AG04450 (cell line): ENCODE measurements at regions of chr12 and their contacts with region 1.

Region 1: GRCh38 chr12:64696080-64696741 is 63.0 kb downstream of the GNS start:
- DNase-seq: no peak
- H3K4me3 ChIP-seq: no peak overlapping the region
- H3K27ac ChIP-seq: no peak overlapping the region
- H3K27me3 ChIP-seq: no peaks in the 10 kb centered on the region
- CTCF ChIP-seq: peak; percentile 34; the same call in 1 of the 2 replicates

Region 2: DNA sequence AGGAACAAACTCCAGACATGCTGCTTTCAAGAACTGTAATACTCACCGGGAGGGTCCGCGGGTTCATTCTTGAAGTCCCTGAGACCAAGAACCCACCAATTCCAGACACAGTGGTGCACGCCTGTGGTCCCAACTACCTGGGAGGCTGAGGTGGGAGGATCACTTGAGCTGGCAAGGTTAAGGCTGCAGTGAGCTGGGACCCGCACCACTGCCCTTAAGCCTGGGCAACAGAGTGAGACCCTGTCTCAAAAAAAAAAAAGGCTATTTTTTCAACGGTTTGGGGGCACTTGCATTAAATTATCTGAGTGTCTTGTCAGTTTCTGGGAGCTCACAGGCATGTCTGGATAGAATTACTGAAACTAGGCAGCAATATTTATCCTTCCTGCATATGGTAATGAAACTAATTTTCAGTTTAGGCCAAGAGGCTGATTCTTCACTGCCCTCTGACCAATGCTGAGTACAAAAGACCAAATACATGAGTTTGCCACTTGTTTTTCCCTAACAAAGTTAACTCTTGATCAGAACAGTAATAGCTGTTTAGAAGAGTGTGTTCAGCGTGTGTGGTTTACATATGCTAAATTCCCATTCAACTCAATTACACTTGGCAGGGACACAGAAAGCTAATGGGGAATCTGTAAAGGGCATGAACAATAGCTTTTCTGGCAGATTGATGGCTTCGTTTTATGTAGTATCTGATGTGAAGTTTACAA is 151.7 kb before region 1 on chr12:
- CTCF ChIA-PET with region 1: interaction called, 230 read pairs
- POLR2A ChIA-PET with region 1: interaction called, 11 read pairs
- DNase-seq: no peak
- H3K4me3 ChIP-seq: no peak overlapping the region
- H3K27ac ChIP-seq: no peak overlapping the region
- H3K27me3 ChIP-seq: no peaks in the 10 kb centered on the region
- CTCF ChIP-seq: no peak

Region 3: DNA sequence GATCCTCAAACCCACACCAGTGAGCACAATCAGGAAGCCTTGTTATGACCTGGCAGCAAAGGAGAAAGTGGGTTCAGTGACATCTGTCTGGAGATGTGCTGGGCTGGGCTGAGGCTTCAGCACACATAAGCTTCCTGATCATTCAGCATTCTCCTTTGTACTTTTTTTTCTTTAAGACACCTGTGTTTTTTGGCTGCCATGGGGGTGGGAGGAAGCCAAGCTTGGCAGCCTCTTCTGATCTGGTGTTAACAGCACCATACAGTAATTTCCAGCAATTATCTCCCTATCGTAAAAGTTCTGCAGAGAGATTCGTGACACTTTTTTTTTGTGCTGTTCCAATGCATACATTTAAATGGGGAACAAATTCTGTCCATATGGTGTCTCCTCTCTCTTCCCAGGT is 124.8 kb before region 1 on chr12:
- CTCF ChIA-PET with region 1: interaction called, 11 read pairs
- POLR2A ChIA-PET with region 1: interaction called, 5 read pairs
- DNase-seq: no peak
- H3K4me3 ChIP-seq: no peak overlapping the region
- H3K27ac ChIP-seq: no peak overlapping the region
- H3K27me3 ChIP-seq: peaks cover 3% of the 10 kb centered on the region
- CTCF ChIP-seq: no peak

Region 4: GRCh38 chr12:64618953-64619590 is 77.1 kb before region 1 on chr12:
- CTCF ChIA-PET with region 1: interaction called, 12 read pairs
- POLR2A ChIA-PET with region 1: no interaction called
- DNase-seq: no peak
- H3K4me3 ChIP-seq: no peak overlapping the region
- H3K27ac ChIP-seq: no peak overlapping the region
- H3K27me3 ChIP-seq: no peaks in the 10 kb centered on the region
- CTCF ChIP-seq: no peak

Region 5: DNA sequence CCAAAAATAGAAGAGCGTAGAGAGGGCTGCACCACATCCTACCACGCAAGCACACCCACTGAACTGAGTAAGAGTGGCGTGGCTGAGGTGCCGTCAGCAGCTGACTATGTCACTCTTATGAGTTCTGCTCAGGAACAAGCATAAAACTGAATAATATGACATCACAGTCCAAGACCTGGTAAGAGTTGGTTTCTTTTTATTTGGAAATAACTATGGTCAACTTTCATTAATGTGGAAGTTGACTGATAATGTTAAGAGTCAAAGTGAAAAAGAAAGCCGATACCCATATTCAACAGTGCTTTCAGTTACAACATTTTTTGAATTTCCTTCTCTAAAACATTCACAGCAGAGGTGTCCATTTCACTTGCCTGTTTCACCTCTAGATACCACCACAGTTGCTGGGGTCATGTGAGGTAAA is 18.3 kb after region 1 on chr12:
- CTCF ChIA-PET with region 1: interaction called, 15 read pairs
- POLR2A ChIA-PET with region 1: no interaction called
- DNase-seq: no peak
- H3K4me3 ChIP-seq: no peak overlapping the region
- H3K27ac ChIP-seq: no peak overlapping the region
- H3K27me3 ChIP-seq: no peaks in the 10 kb centered on the region
- CTCF ChIP-seq: no peak

Region 6: DNA sequence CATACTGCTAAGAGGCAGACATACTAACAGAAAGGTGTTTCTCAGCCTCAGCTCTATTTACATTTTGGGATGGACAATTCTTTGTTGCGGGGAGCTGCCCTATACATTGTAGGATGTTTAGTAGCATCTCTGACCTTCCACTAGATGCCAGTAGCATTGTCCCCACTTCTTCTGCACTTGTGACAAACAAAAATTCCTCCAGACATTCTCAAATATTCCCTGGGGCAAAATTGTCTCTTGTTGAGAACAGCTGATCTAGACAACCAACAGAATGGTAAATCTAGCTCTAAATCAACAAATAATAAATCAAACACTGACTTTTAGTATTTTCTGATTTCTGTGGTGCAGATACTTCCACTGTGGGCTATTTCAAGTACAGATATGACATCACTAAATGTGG is 642.9 kb after region 1 on chr12:
- CTCF ChIA-PET with region 1: no interaction called
- POLR2A ChIA-PET with region 1: no interaction called
- DNase-seq: no peak
- H3K4me3 ChIP-seq: no peak overlapping the region
- H3K27ac ChIP-seq: no peak overlapping the region
- H3K27me3 ChIP-seq: no peaks in the 10 kb centered on the region
- CTCF ChIP-seq: no peak